ENCODE measurements at regions of chr2 and their contacts with region 1.

Region 1: GRCh38 chr2:207156451-207157161 is 9.1 kb downstream of the KLF7 start:
- DNase-seq: no peak
- ATAC-seq: no peak
- H3K4me3 ChIP-seq: no peak overlapping the region
- H3K27ac ChIP-seq: peak overlapping the region in 6 of 10 donors; percentile 15 to 100 (median 54)
- H3K4me1 ChIP-seq: peaks cover 26 to 100% (median 99%) of the 10 kb centered on the region in 9 donors
- H3K27me3 ChIP-seq: no peaks in the 10 kb centered on the region
- CTCF ChIP-seq: no peak

Region 2: GRCh38 chr2:207121784-207122183 is 34.8 kb before region 1 on chr2:
- intact Hi-C with region 1: loop called in 1 of 10 experiments (anchors 5 kb)
- DNase-seq: no peak
- ATAC-seq: peak in 7 of 8 donors; percentile 30 to 80 (median 51)
- H3K4me3 ChIP-seq: no peak overlapping the region
- H3K27ac ChIP-seq: peak overlapping the region in 9 of 10 donors; percentile 8 to 71 (median 46)
- H3K4me1 ChIP-seq: peaks cover 4 to 78% (median 52%) of the 10 kb centered on the region in 9 donors
- H3K27me3 ChIP-seq: no peaks in the 10 kb centered on the region
- CTCF ChIP-seq: no peak

Region 3: DNA sequence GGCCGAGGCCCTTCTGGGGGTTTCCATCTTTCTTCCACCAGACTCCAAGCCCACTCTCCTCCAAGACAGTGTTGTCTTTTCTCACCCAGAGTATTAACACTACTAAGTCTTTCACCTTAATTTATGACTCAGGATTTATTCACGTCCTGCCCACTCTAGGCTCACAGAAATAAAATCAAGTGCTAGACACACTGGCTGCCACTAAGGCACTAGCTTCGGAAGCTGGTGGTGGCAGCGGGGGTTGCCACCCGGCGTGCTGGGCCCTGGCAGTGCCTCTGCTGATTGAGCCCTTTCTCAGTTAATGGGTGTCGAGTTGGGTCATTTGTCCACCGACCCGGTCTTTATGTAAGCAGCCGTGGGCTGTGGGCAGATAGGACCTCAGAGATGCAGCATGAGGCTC is 706.7 kb after region 1 on chr2:
- intact Hi-C with region 1: no loop called
- DNase-seq: no peak
- ATAC-seq: no peak
- H3K4me3 ChIP-seq: no peak overlapping the region
- H3K27ac ChIP-seq: no peak overlapping the region
- H3K4me1 ChIP-seq: peaks cover 0 to 14% (median 4%) of the 10 kb centered on the region in 9 donors
- H3K27me3 ChIP-seq: no peaks in the 10 kb centered on the region
- CTCF ChIP-seq: no peak